ENCODE measurements at regions of chr3 and their contacts with region 1.

Region 1: GRCh38 chr3:148955544-148956346 is 35.6 kb upstream of the GYG1 start:
- DNase-seq: peak; percentile 47
- ATAC-seq: peak; percentile 65
- H3K4me3 ChIP-seq: peak overlapping the region; percentile 2 to 57 (median 11); a peak in 3 of 6 replicates
- H3K27ac ChIP-seq: no peak overlapping the region
- H3K4me1 ChIP-seq: peaks cover 43% of the 10 kb centered on the region
- H3K27me3 ChIP-seq: peaks cover 0 to 3% of the 10 kb centered on the region in 2 experiments; a peak in 1 of 5 replicates
- CTCF ChIP-seq: peak; percentile 65
- EP300 ChIP-seq: no peak
- POLR2A ChIP-seq: no peak
- RAD21 ChIP-seq: no peak

Region 2: DNA sequence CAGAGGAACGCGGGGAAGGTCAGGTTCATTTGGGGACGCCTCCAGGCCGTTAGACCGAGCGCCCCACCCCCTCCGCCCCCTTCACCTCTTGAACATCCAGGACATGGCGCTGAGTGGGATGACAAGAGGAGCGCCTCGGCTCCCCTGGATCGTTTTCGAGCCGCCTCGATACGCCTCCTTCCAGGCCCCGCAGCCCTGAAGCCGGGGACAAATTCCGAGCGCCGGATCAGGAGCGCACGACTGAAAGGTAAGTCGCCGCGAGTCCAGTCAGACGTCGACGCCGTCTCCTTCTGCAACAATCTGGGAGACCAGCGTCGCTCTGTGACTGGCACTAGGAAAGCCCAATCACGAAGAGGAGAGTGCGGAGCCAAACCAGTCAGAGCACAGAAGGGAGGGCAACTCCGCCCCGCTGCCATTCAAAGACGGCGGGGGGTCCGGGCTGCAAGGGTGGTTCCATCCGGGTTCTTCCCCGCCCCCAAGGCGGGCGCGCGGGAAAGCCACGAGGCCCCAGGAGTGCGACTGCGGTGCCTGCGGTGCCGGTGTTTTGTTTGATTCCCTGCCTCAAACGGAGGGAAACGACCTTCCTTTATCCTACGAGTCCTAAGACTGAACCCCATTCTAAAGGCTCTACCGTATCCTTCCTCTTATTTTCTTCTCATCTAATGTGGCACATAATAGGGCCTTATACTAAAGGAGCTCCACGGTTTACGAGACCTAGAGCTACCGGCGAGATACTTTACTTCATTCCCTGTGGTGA is 130.7 kb after region 1 on chr3 and contains the start of gene HLTF:
- CTCF ChIA-PET with region 1: no interaction called
- POLR2A ChIA-PET with region 1: no interaction called
- in situ Hi-C with region 1: no loop called
- intact Hi-C with region 1: loop called (anchors 10 kb)
- DNase-seq: peak; percentile 92
- ATAC-seq: peak; percentile 99
- H3K4me3 ChIP-seq: peak within 1 kb of the TSS; percentile 71 to 81 (median 81)
- H3K27ac ChIP-seq: peak within 1 kb of the TSS; percentile 49
- H3K4me1 ChIP-seq: peaks cover 20% of the 10 kb centered on the region
- H3K27me3 ChIP-seq: no peaks in the 10 kb centered on the region; a peak in 2 of 5 replicates
- CTCF ChIP-seq: no peak
- EP300 ChIP-seq: no peak
- POLR2A ChIP-seq: peak; percentile 40 to 75; a peak in 3 of 4 replicates
- RAD21 ChIP-seq: 0 out of 2 replicates have a peak, but pooled peaks have one; percentile 16
- total RNA-seq, gene HLTF: 22.9 and 39.8 TPM in 2 replicates

Region 3: DNA sequence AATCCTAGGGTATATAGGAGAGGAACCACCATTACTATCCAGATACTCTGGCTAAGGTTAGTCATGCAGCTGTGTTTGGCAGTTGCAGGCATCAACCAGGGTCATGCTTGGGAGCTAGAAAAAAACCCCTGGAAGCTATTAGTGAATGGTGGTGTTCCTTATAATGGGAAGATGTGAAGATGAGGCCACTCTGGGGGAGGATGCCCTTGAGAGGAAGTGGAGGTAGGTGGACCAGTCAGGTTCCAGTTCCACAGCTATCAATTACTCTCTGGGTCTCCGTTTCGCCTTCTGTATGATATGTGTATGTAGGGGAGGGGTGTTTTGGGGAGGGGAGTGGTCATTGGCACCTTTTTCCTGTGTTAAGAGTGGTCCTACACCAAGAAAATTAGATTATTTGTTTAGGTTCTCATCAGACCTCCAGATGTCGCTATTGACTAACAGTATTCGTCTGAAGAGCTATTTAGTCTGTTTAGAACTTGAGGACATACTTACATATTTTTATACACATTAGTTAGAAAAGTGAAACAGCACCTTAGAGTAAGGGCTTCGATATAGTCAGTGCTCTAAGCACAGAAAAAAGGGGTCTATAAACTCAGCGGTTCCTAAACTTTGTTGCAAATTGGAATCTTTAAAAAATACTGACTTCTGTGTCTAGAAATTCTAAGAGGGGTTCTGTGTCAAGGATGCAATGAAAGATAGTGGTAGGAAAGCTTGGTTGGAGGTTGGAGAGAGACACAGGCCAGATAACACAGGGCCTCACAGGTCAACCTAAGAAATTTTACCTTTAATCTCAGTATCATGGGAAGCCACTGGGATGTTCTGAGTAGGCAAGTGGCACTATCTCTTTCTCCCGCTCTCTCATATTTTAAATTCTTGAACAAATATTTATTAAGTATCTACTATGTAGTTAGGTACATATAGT is 164.6 kb after region 1 on chr3:
- CTCF ChIA-PET with region 1: interaction called, 8 read pairs
- POLR2A ChIA-PET with region 1: no interaction called
- in situ Hi-C with region 1: loop called (anchors 10 kb)
- intact Hi-C with region 1: loop called (anchors 2 kb)
- DNase-seq: peak; percentile 62
- ATAC-seq: peak; percentile 83
- H3K4me3 ChIP-seq: no peak overlapping the region
- H3K27ac ChIP-seq: no peak overlapping the region
- H3K4me1 ChIP-seq: peaks cover 26% of the 10 kb centered on the region; the same call in 1 of the 2 replicates
- H3K27me3 ChIP-seq: peaks cover 2 to 10% of the 10 kb centered on the region in 2 experiments; a peak in 2 of 5 replicates
- CTCF ChIP-seq: peak; percentile 78
- EP300 ChIP-seq: no peak
- POLR2A ChIP-seq: no peak
- RAD21 ChIP-seq: peak; percentile 65; the same call in 1 of the 2 replicates

Region 4: GRCh38 chr3:149330609-149331331 is 375.0 kb after region 1 on chr3:
- CTCF ChIA-PET with region 1: no interaction called
- POLR2A ChIA-PET with region 1: no interaction called
- in situ Hi-C with region 1: no loop called
- intact Hi-C with region 1: loop called (anchors 5 kb)
- DNase-seq: no peak
- ATAC-seq: no peak
- H3K4me3 ChIP-seq: no peak overlapping the region
- H3K27ac ChIP-seq: no peak overlapping the region
- H3K4me1 ChIP-seq: peaks cover 12% of the 10 kb centered on the region
- H3K27me3 ChIP-seq: no peaks in the 10 kb centered on the region
- CTCF ChIP-seq: no peak
- EP300 ChIP-seq: no peak
- POLR2A ChIP-seq: no peak
- RAD21 ChIP-seq: no peak